ENCODE measurements at regions of chr2 and their contacts with region 1.

Region 1: DNA sequence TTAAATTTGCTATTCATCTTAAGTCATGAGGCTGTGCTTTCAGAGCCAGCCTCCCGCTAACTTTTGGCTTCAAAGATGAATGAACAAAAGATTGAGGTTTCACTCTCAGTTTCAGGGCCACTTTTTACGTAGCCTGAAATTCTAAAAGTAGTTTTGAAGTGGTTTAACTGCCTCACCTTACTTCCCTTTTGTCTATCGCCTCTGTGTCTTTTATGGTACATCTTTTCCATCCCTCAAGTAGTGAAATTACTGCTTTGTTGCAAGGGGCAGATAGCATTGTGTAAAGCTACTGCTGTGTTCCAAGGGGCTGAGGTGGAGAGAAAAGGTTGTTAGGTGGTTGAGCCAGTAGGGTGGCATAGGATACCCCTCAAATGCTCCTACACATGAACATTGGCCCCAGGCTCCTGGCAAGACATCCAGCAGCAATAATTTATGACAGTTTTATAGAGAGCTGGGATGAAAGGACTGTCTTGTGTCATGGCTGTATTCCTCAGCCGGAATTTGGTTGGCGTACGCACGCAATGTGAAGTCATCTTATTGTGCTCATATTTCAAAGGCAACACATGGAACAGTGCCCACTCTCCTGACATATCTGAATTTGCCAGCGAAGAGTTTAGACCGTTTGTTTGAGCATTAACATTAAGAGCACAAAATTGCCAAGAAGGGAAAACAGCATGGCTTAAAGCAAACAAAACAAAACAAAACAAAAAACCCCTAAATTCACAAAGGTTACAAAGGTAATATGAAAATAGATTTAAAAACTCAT is 32.2 kb downstream of the QPCT start:
- DNase-seq: no peak
- H3K4me3 ChIP-seq: no peak overlapping the region
- H3K27ac ChIP-seq: no peak overlapping the region
- H3K4me1 ChIP-seq: peaks cover 14% of the 10 kb centered on the region
- H3K27me3 ChIP-seq: no peaks in the 10 kb centered on the region
- CTCF ChIP-seq: no peak
- POLR2A ChIP-seq: no peak

Region 2: GRCh38 chr2:37344453-37345361 is 31.9 kb before region 1 on chr2 and contains the start of gene QPCT:
- CTCF ChIA-PET with region 1: interaction called, 10 read pairs
- POLR2A ChIA-PET with region 1: no interaction called
- dilution Hi-C with region 1: no loop called
- intact Hi-C with region 1: no loop called
- DNase-seq: peak; percentile 39
- H3K4me3 ChIP-seq: peak within 1 kb of the TSS; percentile 9 to 54 (median 53)
- H3K27ac ChIP-seq: peak within 1 kb of the TSS; percentile 46
- H3K4me1 ChIP-seq: peaks cover 17% of the 10 kb centered on the region
- H3K27me3 ChIP-seq: no peaks in the 10 kb centered on the region
- CTCF ChIP-seq: no peak
- POLR2A ChIP-seq: no peak
- total RNA-seq, gene QPCT: 12.8 and 14.3 TPM in 2 replicates

Measured in endothelial cell of umbilical vein (primary cell).